ENCODE measurements at regions of chr16 and their contacts with region 1.

Region 1: DNA sequence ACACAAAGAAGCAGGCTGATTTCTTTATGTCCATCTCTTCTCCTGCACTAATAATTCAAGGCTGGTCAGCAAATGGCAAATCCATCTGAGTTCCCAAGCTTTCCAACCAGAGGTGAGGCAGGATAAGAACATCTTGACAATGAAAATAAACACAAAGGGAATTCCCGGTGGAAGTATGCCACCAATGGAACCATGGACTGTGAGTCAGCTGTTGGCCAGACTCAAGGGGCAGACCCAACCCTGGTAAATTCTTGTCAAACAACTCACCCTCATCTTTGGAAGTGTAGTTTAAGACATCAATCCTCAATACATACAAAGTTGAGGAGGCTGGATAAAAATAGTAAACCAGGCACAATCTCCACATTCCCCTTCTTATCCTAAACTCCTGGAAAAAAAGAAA is 74.3 kb upstream of the CES5A start:
- DNase-seq: no peak
- H3K4me3 ChIP-seq: no peak overlapping the region
- CTCF ChIP-seq: no peak
- POLR2A ChIP-seq: no peak

Region 2: DNA sequence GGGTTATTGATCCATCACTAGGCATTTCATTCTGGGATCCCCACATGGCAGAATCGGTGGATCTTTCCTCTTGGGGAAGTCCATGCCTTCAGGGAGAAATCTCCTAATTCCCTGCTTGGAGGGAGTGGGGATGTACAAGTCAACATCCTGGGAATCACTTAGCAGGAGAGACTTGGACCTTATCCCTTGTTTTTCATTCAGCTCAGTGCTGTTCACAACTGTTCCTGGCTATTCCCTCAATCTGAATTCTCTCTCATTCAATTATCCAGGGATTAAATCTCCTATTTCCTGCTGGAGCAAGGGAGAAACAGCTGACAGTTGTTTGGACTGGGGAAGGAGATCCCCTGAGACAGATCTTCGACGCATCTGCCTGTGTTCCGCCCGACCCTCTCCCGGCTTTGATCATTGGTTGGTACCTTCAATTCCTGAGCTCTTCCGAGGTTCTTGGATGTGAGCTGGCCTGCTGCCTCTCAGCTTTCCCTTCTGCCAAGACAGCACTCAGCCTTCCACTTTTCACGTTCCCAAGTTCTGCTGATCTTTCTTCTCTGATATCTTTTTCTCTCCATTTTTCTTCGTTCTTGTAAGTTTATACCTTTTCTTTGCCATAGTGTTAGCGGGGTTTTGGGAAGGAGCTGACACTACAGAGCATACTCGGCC is 126.3 kb after region 1 on chr16:
- intact Hi-C with region 1: no loop called
- DNase-seq: peak in 1 of 2 donors; percentile 18
- H3K4me3 ChIP-seq: no peak overlapping the region
- CTCF ChIP-seq: no peak
- POLR2A ChIP-seq: no peak

Region 3: DNA sequence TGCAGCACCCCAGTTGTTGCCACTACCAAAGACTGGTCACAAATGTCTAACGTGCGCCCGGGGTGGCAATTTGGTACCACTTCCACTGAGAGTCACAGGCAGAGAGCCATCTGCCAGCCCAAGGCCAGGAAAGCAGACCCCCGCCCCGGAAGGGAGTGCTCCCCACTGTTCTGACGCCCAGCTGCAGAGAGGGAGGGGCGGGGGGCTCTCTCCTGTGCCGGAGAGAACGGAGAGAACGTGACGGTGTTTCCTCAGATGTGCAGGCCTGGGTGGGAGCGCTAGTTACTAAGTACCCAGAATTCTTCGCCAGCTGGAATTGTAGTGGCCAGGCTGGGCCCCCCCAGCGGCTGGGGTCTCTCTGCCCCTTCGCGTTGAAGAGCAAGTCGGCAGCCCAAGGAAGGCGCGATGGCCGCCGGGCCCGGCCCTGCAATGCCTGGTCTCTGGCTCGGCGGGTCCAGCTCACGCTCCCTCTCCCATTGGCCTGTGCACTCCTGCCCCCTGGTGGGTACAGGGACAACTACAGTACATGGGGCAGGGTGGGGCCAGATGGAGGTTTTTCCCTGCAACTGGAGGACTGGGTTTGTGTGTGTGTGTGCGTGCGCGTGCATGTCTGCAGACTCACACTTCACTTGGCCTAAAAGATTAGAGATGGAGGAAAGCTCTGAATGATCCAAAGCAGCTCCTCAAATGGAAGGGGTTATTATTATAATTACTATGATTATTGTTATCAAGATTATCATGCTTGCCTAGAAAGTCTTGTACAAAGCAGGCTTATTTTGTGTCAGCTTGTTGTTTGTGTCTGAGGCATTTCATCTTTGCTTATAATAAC is 368.7 kb after region 1 on chr16:
- intact Hi-C with region 1: loop called (anchors 5 kb)
- DNase-seq: peak; percentile 70 to 96
- H3K4me3 ChIP-seq: no peak overlapping the region
- CTCF ChIP-seq: no peak
- POLR2A ChIP-seq: no peak

Region 4: DNA sequence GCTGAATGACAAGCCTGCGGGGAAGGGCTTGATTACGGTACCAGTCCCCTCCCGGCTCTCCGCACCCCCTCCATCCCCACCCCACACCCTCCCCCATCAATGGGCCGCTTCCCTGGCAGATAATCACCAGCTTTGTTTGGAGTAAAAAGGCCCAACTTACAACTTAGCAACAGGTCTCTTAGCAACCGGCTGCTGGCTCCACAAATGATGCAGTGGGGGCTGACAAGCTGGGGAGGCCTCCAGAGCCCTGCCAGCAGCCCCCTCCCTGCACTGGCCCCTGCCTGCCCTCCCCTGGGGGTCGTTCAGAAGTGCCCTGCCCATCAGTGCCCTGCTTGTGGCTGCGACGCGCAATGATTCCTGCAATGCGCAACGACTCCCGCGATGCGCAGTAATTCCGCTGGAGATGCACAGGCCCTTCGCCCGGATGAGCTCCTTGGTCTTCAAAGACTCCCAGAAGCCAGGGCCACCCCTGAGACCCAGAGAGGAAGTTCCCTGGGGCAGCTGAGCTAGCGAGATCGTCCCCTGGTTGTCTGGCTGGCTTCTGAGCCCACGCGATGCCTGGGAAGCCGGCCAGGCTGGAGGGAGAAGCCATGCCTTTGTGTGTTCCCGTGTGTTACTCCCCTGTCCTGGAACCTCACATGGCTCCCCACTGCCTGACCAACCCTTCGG is 1166.1 kb after region 1 on chr16:
- intact Hi-C with region 1: no loop called
- DNase-seq: no peak
- H3K4me3 ChIP-seq: no peak overlapping the region
- CTCF ChIP-seq: no peak
- POLR2A ChIP-seq: no peak